MCF 10A (cell line): ENCODE measurements at regions of chr15 and their contacts with region 1.

Region 1: DNA sequence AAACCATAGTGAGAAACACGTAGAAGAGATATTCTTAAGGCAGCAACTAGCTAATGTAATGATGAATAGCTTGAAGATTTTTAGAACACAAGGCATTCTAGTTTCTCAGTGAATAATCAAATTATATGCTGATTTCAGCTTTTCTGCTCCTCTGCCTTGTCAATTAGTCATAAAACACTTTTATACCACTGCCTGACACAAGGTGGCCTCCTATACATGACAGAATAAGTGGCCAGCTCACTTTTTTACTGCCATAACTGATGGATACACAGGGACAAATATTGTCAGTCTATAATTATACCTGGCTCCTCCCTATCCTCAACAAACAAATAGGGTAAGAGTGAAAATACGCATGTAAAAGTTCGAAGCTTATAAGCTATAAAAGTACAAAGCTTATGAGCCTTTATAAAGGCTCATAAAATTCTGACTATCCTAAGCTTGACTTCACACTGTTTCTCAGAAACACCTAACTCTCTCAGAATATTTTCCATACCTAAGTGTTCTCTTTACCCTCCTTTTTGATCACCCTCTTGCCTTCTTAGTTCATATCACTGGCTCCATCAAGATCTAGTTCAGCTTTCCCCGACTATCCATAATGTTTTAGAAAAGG is 81.6 kb downstream of the HERC1 start:
- DNase-seq: peak; percentile 68
- H3K4me3 Mint-ChIP-seq: no peak overlapping the region
- H3K27ac Mint-ChIP-seq: peak overlapping the region; percentile 17
- H3K4me1 Mint-ChIP-seq: no peaks in the 10 kb centered on the region
- H3K27me3 Mint-ChIP-seq: no peaks in the 10 kb centered on the region
- CTCF ChIP-seq: peak; percentile 80

Region 2: DNA sequence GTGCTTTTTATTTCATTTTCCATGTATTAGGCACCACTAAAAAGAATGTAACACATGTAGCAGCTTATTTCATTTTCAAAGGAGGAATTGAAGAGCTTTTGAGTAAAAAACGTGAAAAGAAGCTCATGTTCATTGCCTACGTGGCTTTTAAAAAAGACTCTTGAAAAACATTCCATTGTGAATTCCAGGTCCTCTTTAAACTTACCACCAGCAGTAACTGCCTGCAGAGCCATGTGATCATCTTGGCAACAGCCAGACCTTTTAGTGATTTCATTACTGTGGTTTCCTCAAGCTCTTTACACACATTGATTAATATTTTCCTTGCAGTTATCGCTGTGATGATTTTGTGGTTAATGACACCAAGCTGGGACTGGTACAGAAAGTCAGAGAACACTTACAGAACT is 198.8 kb before region 1 on chr15:
- CTCF ChIA-PET with region 1: no interaction called
- POLR2A ChIA-PET with region 1: no interaction called
- intact Hi-C with region 1: no loop called
- DNase-seq: peak; percentile 62
- H3K4me3 Mint-ChIP-seq: peak overlapping the region; percentile 30
- H3K27ac Mint-ChIP-seq: peak overlapping the region; percentile 6
- H3K4me1 Mint-ChIP-seq: peaks cover 22% of the 10 kb centered on the region
- H3K27me3 Mint-ChIP-seq: no peaks in the 10 kb centered on the region
- CTCF ChIP-seq: no peak

Region 3: GRCh38 chr15:63763476-63764123 is 11.4 kb after region 1 on chr15:
- CTCF ChIA-PET with region 1: interaction called, 11 read pairs
- POLR2A ChIA-PET with region 1: interaction called, 3 read pairs
- intact Hi-C with region 1: no loop called
- DNase-seq: no peak
- H3K4me3 Mint-ChIP-seq: no peak overlapping the region
- H3K27ac Mint-ChIP-seq: peak overlapping the region; percentile 2
- H3K4me1 Mint-ChIP-seq: peaks cover 6% of the 10 kb centered on the region
- H3K27me3 Mint-ChIP-seq: no peaks in the 10 kb centered on the region
- CTCF ChIP-seq: no peak

Region 4: DNA sequence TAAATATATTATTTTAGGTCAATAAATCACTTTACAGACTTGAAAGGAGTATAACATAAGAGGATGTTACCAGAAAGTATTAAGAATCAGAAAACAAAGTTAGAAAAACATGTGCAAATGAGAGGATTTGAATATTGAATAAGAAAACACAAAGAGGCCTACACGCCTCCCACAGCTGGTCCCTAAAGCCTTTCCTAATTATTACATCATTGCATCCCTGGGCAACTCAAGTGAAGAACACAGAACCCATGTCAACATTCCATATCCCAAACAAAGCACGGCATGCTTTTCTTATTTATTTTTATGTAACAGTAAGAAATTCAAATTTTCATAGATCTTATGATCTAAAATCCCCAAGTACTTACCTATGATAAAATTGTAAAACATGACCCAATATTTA is 20.3 kb after region 1 on chr15:
- CTCF ChIA-PET with region 1: interaction called, 13 read pairs
- POLR2A ChIA-PET with region 1: interaction called, 3 read pairs
- intact Hi-C with region 1: no loop called
- DNase-seq: no peak
- H3K4me3 Mint-ChIP-seq: no peak overlapping the region
- H3K27ac Mint-ChIP-seq: no peak overlapping the region
- H3K4me1 Mint-ChIP-seq: no peaks in the 10 kb centered on the region
- H3K27me3 Mint-ChIP-seq: no peaks in the 10 kb centered on the region
- CTCF ChIP-seq: no peak

Region 5: GRCh38 chr15:63891079-63891767 is 139.0 kb after region 1 on chr15:
- CTCF ChIA-PET with region 1: interaction called, 20 read pairs
- POLR2A ChIA-PET with region 1: interaction called, 5 read pairs
- intact Hi-C with region 1: loop called (anchors 1 kb)
- DNase-seq: peak; percentile 83
- H3K4me3 Mint-ChIP-seq: no peak overlapping the region
- H3K27ac Mint-ChIP-seq: no peak overlapping the region
- H3K4me1 Mint-ChIP-seq: no peaks in the 10 kb centered on the region
- H3K27me3 Mint-ChIP-seq: no peaks in the 10 kb centered on the region
- CTCF ChIP-seq: peak; percentile 77

Region 6: GRCh38 chr15:64038878-64039610 is 286.9 kb after region 1 on chr15:
- CTCF ChIA-PET with region 1: interaction called, 17 read pairs
- POLR2A ChIA-PET with region 1: no interaction called
- intact Hi-C with region 1: no loop called
- DNase-seq: no peak
- H3K4me3 Mint-ChIP-seq: no peak overlapping the region
- H3K27ac Mint-ChIP-seq: no peak overlapping the region
- H3K4me1 Mint-ChIP-seq: no peaks in the 10 kb centered on the region
- H3K27me3 Mint-ChIP-seq: no peaks in the 10 kb centered on the region
- CTCF ChIP-seq: no peak